ENCODE measurements at regions of chr9 and their contacts with region 1.

Region 1: DNA sequence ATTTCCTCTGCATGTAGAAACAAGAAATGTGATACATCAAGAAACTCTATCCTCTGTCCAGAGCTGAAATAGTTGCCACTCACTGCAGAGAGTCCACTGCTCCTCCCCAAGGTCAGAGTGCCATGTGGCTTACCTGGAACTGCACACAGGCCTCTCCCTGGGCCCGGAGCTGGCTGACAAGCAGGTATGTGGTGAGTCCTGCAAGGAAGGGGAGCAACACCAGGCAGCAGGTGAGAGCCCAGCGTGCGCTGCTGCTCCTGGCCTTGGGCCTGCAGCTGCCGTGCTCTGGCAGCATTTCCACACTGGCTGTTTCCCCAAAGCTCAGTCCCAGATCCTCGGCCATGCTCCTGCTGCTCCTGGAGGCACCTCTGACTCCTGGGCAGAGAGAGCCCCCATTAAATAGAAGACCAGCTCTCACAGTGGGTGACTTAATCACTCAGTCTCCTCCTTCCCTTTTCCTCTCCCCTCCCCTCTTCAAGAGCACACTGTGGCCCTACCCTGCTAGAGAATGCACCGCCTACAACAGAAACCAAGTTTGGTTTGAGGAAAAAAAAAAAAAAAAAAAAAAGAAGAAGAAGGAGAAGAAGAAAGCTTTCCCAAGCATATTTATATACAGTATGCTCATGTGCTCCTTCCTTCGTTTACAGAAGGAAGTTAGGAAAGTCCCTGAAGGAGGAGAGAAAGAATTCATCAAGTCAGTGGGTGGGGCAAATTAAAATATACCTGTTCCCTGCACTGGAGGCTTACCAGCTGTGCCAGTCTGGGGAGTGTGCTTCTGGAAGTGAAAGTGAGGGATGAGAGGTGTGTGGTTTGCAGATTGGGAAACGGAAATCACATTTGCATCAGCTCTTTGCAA is at the start of gene TNFSF15:
- DNase-seq: peak; percentile 80
- H3K4me3 Mint-ChIP-seq: peak within 1 kb of the TSS; percentile 79
- H3K27ac Mint-ChIP-seq: peak within 1 kb of the TSS; percentile 39
- H3K4me1 Mint-ChIP-seq: peaks cover 48% of the 10 kb centered on the region
- H3K27me3 Mint-ChIP-seq: peaks cover 17% of the 10 kb centered on the region
- total RNA-seq, gene TNFSF15: 1.4 and 1.5 TPM in 2 replicates

Region 2: DNA sequence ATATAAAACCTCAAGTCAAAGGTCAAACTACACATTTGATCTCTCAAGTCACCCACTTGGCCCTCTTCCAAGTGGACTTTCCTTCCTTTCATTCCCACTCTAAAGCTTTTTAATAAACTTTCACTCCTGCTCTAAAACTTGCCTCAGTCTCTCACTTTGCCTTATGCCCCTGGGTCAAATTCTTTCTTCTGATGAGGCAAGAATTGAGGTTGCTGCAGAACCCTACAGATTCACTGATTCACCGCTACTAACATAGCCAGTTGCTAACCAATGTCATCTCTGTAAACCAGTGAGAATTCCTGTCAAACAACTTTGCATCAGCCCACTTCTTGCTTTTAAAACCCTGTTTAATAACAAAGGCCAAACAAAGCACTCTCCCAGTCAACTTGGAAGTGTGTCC is 225.2 kb before region 1 on chr9:
- intact Hi-C with region 1: no loop called
- DNase-seq: no peak
- H3K4me3 Mint-ChIP-seq: no peak overlapping the region
- H3K27ac Mint-ChIP-seq: no peak overlapping the region
- H3K4me1 Mint-ChIP-seq: no peaks in the 10 kb centered on the region
- H3K27me3 Mint-ChIP-seq: peaks cover 11% of the 10 kb centered on the region

Region 3: GRCh38 chr9:114681594-114682332 is 124.1 kb before region 1 on chr9 and contains the start of gene TEX48:
- intact Hi-C with region 1: loop called (anchors 2 kb)
- DNase-seq: peak; percentile 95
- H3K4me3 Mint-ChIP-seq: peak within 1 kb of the TSS; percentile 39
- H3K27ac Mint-ChIP-seq: peak within 1 kb of the TSS; percentile 97
- H3K4me1 Mint-ChIP-seq: peaks cover 66% of the 10 kb centered on the region
- H3K27me3 Mint-ChIP-seq: no peaks in the 10 kb centered on the region
- total RNA-seq, gene TEX48: 0.52 and 0.56 TPM in 2 replicates

Region 4: GRCh38 chr9:114738581-114739316 is 67.1 kb before region 1 on chr9:
- intact Hi-C with region 1: loop called (anchors 2 kb)
- DNase-seq: peak; percentile 91
- H3K4me3 Mint-ChIP-seq: peak overlapping the region; percentile 33
- H3K27ac Mint-ChIP-seq: peak overlapping the region; percentile 93
- H3K4me1 Mint-ChIP-seq: peaks cover 63% of the 10 kb centered on the region
- H3K27me3 Mint-ChIP-seq: no peaks in the 10 kb centered on the region

Region 5: DNA sequence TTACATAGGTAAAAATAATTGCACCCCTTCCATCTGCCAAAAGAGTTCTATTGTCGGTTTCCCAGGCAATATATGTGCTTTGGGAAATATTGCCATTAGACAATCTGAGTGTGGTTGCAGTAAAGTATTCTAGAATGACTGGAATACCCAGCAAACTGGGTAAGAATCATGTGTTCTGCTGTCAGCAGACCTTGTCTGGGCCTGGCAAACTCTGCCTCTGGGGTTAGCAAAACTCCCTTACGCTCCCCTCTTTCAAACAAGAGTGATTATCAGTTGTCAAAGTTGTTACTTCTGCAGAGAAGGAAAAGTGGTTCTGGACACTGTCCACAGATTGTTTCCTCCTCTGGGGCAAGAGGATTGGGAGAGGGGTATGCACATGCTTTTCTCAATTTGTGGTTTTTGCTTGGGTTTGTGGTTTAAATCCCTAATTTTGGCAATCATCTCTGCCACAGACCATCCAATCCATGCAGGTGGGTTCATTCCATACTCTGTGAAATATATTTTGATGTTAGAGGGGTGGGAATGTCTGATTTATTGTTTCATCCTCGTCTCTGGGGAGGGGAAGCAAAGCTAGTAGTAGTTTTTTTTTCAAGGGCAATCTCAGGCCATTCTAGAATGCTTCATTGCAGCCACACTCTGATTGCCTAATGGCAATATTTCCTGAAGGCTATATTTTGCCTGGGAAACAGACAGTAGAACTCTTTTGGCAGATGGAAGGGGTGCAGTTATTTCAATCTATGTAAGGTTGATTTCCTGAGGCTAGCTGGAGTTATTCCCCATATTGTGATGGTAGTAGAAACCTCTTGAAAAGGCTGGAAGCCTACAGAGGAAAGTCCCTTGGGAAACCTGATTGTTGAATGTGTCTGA is 23.9 kb after region 1 on chr9:
- intact Hi-C with region 1: loop called (anchors 2 kb)
- DNase-seq: no peak
- H3K4me3 Mint-ChIP-seq: no peak overlapping the region
- H3K27ac Mint-ChIP-seq: no peak overlapping the region
- H3K4me1 Mint-ChIP-seq: peaks cover 21% of the 10 kb centered on the region
- H3K27me3 Mint-ChIP-seq: peaks cover 17% of the 10 kb centered on the region

Region 6: GRCh38 chr9:114894801-114895433 is 89.0 kb after region 1 on chr9:
- intact Hi-C with region 1: loop called (anchors 2 kb)
- DNase-seq: peak; percentile 83
- H3K4me3 Mint-ChIP-seq: peak overlapping the region; percentile 32
- H3K27ac Mint-ChIP-seq: peak overlapping the region; percentile 89
- H3K4me1 Mint-ChIP-seq: peaks cover 48% of the 10 kb centered on the region
- H3K27me3 Mint-ChIP-seq: no peaks in the 10 kb centered on the region

Measured in activated CD4-positive, alpha-beta T cell treated with anti-CD3 and anti-CD28 coated beads, Interleukin-2, amount 10 ng/mL, durations not matched to agents 24 days and 14 days (primary cell).